Prostate gland (tissue), 2 donors: ENCODE measurements at regions of chr9 and their contacts with region 1.

Region 1: DNA sequence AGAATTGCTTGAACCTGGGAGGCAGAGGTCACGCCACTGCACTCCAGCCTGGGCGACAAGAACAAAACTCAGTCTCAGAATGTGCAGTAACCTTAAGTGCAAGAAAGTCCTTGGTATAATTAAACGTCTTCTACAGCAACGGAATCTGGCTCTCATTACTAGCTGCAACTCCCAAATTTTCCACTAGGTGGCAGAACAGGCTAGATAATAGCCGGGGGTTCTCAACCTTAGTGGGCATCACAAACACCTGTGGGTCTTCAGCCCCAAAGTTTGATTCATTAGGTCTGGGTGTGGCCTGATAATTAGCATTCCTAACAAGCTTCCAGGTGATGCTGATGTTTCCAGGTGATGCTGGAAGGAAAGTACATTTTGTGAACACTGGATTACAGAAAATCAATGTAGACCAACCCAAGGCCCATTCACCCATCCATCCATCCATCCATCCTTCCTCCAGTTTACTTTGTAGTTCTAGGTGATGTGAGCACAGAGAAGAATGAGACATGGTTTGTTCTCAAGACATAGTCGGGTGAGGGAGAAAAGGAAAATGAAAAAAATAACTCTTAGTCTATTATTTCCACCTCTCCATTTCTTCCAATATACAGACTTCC is 37.3 kb downstream of the FBXW2 start:
- DNase-seq: peak; percentile 69
- H3K4me3 ChIP-seq: no peak overlapping the region
- H3K27ac ChIP-seq: peak overlapping the region; percentile 44 to 65
- H3K4me1 ChIP-seq: no peaks in the 10 kb centered on the region
- H3K27me3 ChIP-seq: no peaks in the 10 kb centered on the region
- CTCF ChIP-seq: peak; percentile 65 to 92 (median 90)
- POLR2A ChIP-seq: no peak

Region 2: DNA sequence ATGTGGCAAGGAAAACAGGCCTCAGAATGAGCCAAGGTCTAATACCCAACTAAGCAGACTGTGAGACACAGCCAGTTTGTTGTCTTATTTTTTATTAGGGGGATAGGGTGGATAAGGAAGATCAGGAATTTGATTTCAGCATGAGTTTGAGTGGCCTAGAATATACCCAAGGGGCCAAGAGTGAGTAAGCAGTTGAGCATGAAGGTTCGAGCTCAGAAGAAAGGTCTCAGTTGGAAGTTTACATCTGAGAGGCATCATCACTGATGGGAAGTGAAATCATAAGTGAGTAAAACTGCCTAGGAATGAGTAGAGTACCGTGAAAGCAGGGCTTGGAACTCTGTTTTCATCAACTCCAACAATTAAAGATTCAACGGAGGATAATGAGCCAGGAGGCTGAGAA is 74.2 kb after region 1 on chr9:
- intact Hi-C with region 1: no loop called
- DNase-seq: no peak
- H3K4me3 ChIP-seq: no peak overlapping the region
- H3K27ac ChIP-seq: no peak overlapping the region
- H3K4me1 ChIP-seq: no peaks in the 10 kb centered on the region
- H3K27me3 ChIP-seq: no peaks in the 10 kb centered on the region
- CTCF ChIP-seq: no peak
- POLR2A ChIP-seq: no peak

Region 3: DNA sequence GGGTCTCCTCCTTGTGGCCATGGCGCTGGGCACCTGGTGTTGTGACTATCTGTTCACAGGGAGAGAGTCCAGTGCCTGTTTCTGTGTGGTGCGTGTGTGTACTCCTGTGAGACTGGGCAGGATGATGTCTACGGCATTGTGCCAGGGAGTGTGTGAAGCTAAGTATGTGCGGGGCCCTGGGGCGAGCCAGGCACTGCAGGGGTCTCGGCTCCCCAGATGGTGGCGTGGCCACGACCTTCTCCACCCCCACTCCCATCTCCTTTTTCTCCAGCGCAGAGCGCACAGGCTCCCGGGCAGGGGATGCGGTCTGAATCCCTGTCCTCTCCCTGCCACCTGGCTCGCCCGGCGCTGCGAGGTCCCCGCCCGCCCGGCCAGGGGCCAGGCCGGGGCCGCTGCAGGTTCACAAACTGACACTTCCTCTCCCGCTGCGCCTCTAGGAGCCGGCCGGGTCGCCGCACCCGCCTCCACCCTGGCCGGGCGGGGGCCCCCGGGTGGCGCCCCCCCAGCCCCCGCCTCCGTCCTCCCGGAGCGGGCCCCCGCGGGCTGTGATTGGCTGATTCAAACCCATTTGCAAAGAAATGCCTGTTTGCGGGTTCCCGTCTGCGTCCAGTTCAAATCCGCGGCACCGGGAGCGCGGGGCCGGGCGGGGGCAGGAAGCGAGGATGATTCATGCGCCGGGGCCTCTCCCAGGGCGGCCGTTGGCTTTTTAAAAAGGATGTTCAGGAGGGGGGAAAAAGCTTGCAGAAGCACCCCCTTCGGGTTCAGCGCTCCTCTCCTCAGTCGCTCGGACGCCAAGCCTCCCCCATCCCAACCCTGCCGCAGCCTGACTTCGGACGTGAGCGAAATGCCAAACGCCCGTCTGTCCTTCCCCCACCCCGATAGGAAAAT is 120.3 kb after region 1 on chr9:
- intact Hi-C with region 1: loop called (anchors 10 kb)
- DNase-seq: peak; percentile 64
- H3K4me3 ChIP-seq: peak overlapping the region; percentile 52 to 63
- H3K27ac ChIP-seq: peak overlapping the region; percentile 91 to 92
- H3K4me1 ChIP-seq: no peaks in the 10 kb centered on the region
- H3K27me3 ChIP-seq: no peaks in the 10 kb centered on the region
- CTCF ChIP-seq: peak in 2 of 4 experiments; percentile 2 to 13
- POLR2A ChIP-seq: peak; percentile 36

Region 4: DNA sequence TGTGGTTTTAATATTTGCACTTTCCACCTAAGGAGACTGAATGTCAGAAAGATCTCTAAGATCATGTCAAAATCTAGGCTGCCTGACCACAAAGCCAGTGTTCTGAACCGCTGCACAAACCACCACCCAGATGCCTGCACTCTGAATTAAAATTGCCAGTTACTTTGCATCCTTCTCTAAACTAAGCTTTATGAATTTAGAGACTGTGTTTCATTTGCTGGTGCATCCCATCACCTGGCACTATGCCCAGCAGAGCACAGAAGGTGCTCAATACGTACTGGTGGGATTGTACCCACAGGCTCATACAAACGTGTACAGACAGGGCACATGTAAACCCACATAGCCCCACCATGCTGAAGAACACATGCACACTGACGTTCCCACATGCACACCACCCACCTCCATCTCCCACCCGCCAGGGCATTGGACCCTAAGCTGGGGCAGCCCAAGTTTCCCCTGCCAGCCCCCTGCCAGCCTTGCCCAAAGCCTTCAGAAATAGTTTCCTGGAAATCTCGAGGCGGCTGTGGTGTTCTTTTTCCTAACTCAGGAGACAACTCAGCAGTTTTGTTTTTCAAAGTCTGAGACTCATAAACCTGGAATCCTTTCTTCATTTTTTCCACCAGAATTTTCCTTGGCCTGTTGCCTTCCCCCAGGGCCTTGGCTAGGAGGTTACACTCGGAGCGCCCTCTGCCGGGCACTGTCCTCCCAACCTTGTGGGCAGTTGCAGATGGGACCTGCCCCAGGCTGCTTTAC is 180.3 kb after region 1 on chr9:
- intact Hi-C with region 1: loop called (anchors 10 kb)
- DNase-seq: peak; percentile 94
- H3K4me3 ChIP-seq: no peak overlapping the region
- H3K27ac ChIP-seq: peak overlapping the region; percentile 80 to 84
- H3K4me1 ChIP-seq: peaks cover 16% of the 10 kb centered on the region
- H3K27me3 ChIP-seq: no peaks in the 10 kb centered on the region
- CTCF ChIP-seq: peak; percentile 81 to 93 (median 92)
- POLR2A ChIP-seq: no peak

Region 5: GRCh38 chr9:120985810-120986222 is 229.9 kb after region 1 on chr9:
- intact Hi-C with region 1: loop called (anchors 10 kb)
- DNase-seq: peak; percentile 58
- H3K4me3 ChIP-seq: no peak overlapping the region
- H3K27ac ChIP-seq: no peak overlapping the region
- H3K4me1 ChIP-seq: peaks cover 5% of the 10 kb centered on the region
- H3K27me3 ChIP-seq: no peaks in the 10 kb centered on the region
- CTCF ChIP-seq: peak in 3 of 4 experiments; percentile 60 to 75 (median 61)
- POLR2A ChIP-seq: no peak

Region 6: GRCh38 chr9:121048618-121049017 is 292.7 kb after region 1 on chr9:
- intact Hi-C with region 1: no loop called
- DNase-seq: no peak
- H3K4me3 ChIP-seq: no peak overlapping the region
- H3K27ac ChIP-seq: no peak overlapping the region
- H3K4me1 ChIP-seq: no peaks in the 10 kb centered on the region
- H3K27me3 ChIP-seq: no peaks in the 10 kb centered on the region
- CTCF ChIP-seq: no peak
- POLR2A ChIP-seq: no peak

Region 7: GRCh38 chr9:121074635-121075385 is 318.9 kb after region 1 on chr9 and contains the start of gene CNTRL:
- intact Hi-C with region 1: loop called (anchors 5 kb)
- DNase-seq: peak; percentile 87
- H3K4me3 ChIP-seq: peak within 1 kb of the TSS; percentile 65 to 74
- H3K27ac ChIP-seq: peak within 1 kb of the TSS; percentile 88 to 92
- H3K4me1 ChIP-seq: peaks cover 5% of the 10 kb centered on the region
- H3K27me3 ChIP-seq: no peaks in the 10 kb centered on the region
- CTCF ChIP-seq: peak in 2 of 4 experiments; percentile 3 to 13
- POLR2A ChIP-seq: peak; percentile 47
- total RNA-seq, gene CNTRL: 10.3 to 21.9 TPM